Panc1 (cell line): ENCODE measurements at regions of chr17 and their contacts with region 1.

Region 1: DNA sequence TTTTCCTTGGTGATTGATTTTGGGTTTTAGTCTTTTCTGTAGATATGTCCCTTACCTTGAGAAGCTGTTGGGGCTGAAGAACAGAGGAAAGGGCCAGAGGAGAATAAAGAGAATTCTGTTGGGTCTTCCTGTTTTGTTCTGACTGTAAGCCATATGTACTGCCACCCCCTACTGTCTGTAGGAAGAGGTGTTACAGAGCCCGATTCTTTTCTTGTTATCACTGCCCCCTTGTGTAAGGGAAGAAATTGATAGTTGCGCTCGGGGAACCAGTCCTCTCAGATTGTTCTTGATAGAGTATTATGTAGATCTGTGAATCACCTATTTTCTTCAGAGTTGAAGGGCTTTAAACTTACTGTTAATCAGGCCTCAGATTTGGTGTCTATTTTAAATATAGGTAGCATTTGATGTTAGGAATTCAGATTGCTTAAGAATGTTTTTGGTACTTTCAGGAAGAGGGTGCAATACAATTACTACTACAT is 2.4 kb downstream of the TANC2 start:
- DNase-seq: peak; percentile 77
- ATAC-seq: peak; percentile 76
- H3K4me3 ChIP-seq: peak overlapping the region; percentile 77 to 95
- H3K27ac ChIP-seq: peak overlapping the region; percentile 61
- H3K4me1 ChIP-seq: peaks cover 28% of the 10 kb centered on the region
- H3K27me3 ChIP-seq: no peaks in the 10 kb centered on the region
- CTCF ChIP-seq: peak; percentile 89

Region 2: GRCh38 chr17:62703775-62704378 is 264.6 kb before region 1 on chr17:
- CTCF ChIA-PET with region 1: interaction called, 4 read pairs
- POLR2A ChIA-PET with region 1: no interaction called
- in situ Hi-C with region 1: no loop called
- intact Hi-C with region 1: loop called (anchors 1 kb)
- DNase-seq: no peak
- ATAC-seq: peak; percentile 95
- H3K4me3 ChIP-seq: peak overlapping the region; percentile 55 to 68
- H3K27ac ChIP-seq: peak overlapping the region; percentile 79
- H3K4me1 ChIP-seq: peaks cover 29% of the 10 kb centered on the region
- H3K27me3 ChIP-seq: no peaks in the 10 kb centered on the region
- CTCF ChIP-seq: peak; percentile 97

Region 3: DNA sequence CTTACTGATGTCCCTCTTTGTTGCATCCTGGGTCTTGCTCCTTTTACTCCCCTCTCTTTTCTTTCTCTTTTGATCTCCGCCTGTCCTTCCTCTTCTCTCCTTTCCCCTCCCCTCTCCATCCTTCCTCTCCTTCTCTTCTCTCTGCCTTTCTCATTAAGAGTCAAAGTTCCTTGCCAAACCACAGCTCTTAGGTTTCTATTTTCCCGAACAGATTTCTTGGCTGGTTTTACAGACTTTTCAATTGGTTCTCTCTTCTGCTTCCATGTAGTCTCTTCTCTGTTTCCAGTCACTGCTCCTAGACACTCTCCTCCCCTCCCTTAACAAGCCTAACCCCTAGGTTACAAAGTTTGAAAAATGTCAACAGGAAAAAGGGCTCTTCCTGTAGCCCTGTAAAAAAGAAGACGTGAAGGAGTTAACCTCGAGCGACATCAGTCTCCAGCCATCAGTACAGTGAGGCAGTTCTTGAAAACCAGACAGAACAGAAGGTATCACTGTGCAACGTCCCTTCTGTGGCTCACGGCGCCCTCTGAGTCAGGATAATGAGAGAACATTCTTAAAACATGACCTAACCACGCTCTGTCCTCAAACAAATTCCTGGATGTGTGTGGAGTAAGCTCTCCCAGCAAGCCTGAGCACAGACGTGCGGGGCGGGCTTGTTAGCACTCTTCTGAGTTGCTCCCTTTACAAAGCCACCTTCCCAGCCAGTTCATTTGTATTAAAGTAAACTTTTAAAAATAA is 148.8 kb before region 1 on chr17:
- CTCF ChIA-PET with region 1: interaction called, 4 read pairs
- POLR2A ChIA-PET with region 1: interaction called, 4 read pairs
- in situ Hi-C with region 1: no loop called
- intact Hi-C with region 1: loop called (anchors 10 kb)
- DNase-seq: peak; percentile 87
- ATAC-seq: peak; percentile 97
- H3K4me3 ChIP-seq: peak overlapping the region in 1 of 2 experiments; percentile 17; a peak in 2 of 4 replicates
- H3K27ac ChIP-seq: peak overlapping the region; percentile 79
- H3K4me1 ChIP-seq: peaks cover 23% of the 10 kb centered on the region
- H3K27me3 ChIP-seq: no peaks in the 10 kb centered on the region
- CTCF ChIP-seq: no peak